ENCODE measurements at regions of chr10 and their contacts with region 1.

Region 1: GRCh38 chr10:84783386-84783785 is 455.0 kb downstream of the CCSER2 start:
- DNase-seq: peak; percentile 41
- H3K4me3 Mint-ChIP-seq: no peak overlapping the region
- H3K27ac Mint-ChIP-seq: no peak overlapping the region
- H3K4me1 Mint-ChIP-seq: peaks cover 9% of the 10 kb centered on the region
- H3K27me3 Mint-ChIP-seq: peaks cover 16% of the 10 kb centered on the region
- CTCF ChIP-seq: peak; percentile 57

Region 2: DNA sequence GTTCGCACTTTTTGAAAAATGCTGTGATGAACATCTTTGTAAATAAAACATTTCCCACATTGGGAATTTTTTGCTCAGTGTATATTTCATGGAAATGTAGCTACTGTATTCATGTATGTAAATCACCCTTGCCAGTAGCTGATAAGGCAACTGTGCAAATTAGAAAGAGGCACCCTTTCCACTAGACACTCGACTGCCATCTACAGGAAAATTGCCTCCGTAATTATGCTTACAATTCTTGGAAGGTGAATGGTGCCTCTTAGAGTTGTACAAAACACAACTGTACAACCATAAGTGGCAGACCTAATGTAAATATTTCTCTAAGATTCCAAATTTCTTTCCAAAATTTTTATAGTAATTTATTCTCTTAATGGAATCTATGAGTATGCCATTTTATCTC is 36.7 kb after region 1 on chr10:
- CTCF ChIA-PET with region 1: no interaction called
- intact Hi-C with region 1: loop called (anchors 1 kb)
- DNase-seq: peak; percentile 6
- H3K4me3 Mint-ChIP-seq: no peak overlapping the region
- H3K27ac Mint-ChIP-seq: no peak overlapping the region
- H3K4me1 Mint-ChIP-seq: peaks cover 7% of the 10 kb centered on the region
- H3K27me3 Mint-ChIP-seq: peaks cover 41% of the 10 kb centered on the region
- CTCF ChIP-seq: no peak

Measured in Calu3 (cell line).